Natural killer cell (primary cell): ENCODE measurements at regions of chr9 and their contacts with region 1.

Region 1: GRCh38 chr9:72305102-72305546 is 59.9 kb downstream of the ZFAND5 start:
- DNase-seq: peak; percentile 28 to 43
- ATAC-seq: peak; percentile 70 to 91 (median 72)
- H3K4me3 ChIP-seq: peak overlapping the region; percentile 32
- H3K4me3 Mint-ChIP-seq: peak overlapping the region; percentile 87
- H3K27ac ChIP-seq: peak overlapping the region; percentile 86
- H3K27ac Mint-ChIP-seq: peak overlapping the region; percentile 93
- H3K4me1 ChIP-seq: peaks cover 55% of the 10 kb centered on the region
- H3K4me1 Mint-ChIP-seq: peaks cover 56 to 59% of the 10 kb centered on the region in 2 donors
- H3K27me3 ChIP-seq: no peaks in the 10 kb centered on the region
- H3K27me3 Mint-ChIP-seq: no peaks in the 10 kb centered on the region
- CTCF ChIP-seq: no peak

Region 2: GRCh38 chr9:72217306-72217842 is 87.8 kb before region 1 on chr9:
- intact Hi-C with region 1: no loop called
- DNase-seq: no peak
- ATAC-seq: no peak
- H3K4me3 ChIP-seq: no peak overlapping the region
- H3K4me3 Mint-ChIP-seq: no peak overlapping the region
- H3K27ac ChIP-seq: no peak overlapping the region
- H3K27ac Mint-ChIP-seq: no peak overlapping the region
- H3K4me1 ChIP-seq: no peaks in the 10 kb centered on the region
- H3K4me1 Mint-ChIP-seq: no peaks in the 10 kb centered on the region
- H3K27me3 ChIP-seq: no peaks in the 10 kb centered on the region
- H3K27me3 Mint-ChIP-seq: peaks cover 5 to 17% of the 10 kb centered on the region in 2 donors
- CTCF ChIP-seq: no peak

Region 3: DNA sequence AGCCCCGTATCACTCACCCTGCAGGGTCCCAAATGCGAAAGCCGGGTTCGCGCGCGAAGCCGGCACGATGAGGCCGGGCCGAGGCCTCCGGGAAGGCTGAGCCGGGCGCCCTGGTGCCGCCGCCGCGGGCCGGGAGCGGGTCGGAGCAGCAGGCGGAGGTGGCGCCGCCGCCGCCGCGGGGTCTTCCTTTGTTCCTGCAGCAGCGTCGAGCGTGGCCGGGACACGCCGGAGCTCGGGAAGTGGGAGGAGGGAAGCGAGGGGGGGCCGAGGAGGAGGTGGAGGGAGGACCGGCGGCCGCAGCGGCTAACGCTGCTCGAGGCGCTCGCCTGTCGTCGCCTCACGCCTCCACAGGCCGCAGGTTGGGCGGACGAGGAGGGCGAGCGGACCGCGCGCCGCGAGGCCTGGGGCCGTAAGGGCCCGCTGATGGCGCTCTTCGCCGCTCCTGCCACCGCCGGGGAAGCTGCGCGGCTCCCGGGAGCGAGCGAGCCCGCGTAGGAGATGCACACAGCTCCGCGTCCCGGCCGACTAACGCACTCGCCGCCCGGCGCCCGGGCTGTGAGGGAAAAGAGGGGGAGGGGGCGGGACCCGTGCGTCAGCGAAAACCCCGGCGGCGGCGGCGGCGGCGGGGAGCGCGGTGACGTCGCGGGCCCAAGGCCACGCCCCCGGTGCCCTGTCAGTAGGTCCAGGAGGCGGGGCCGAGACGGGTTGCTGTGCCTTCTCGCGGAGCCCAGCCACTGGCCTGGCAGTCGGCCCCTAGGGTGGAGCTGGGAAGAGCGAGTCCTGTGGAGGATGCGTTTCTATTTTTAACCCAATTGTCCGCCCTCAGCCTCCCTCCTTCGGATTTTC is 59.8 kb after region 1 on chr9 and contains the start of gene ZFAND5:
- intact Hi-C with region 1: loop called (anchors 5 kb)
- DNase-seq: peak; percentile 97
- ATAC-seq: peak; percentile 80 to 93 (median 82)
- H3K4me3 ChIP-seq: peak within 1 kb of the TSS; percentile 76
- H3K4me3 Mint-ChIP-seq: peak within 1 kb of the TSS; percentile 94
- H3K27ac ChIP-seq: peak within 1 kb of the TSS; percentile 99
- H3K27ac Mint-ChIP-seq: peak within 1 kb of the TSS; percentile 99
- H3K4me1 ChIP-seq: peaks cover 14% of the 10 kb centered on the region
- H3K4me1 Mint-ChIP-seq: peaks cover 47 to 51% of the 10 kb centered on the region in 2 donors
- H3K27me3 ChIP-seq: no peaks in the 10 kb centered on the region
- H3K27me3 Mint-ChIP-seq: no peaks in the 10 kb centered on the region
- CTCF ChIP-seq: no peak
- total RNA-seq, gene ZFAND5: 307 to 450 (median 318) TPM